ENCODE measurements at regions of chr5 and their contacts with region 1.

Region 1: GRCh38 chr5:69369369-69370121 is at the starts of genes AK6, RAD17 and TAF9:
- DNase-seq: peak; percentile 87 to 99 (median 94)

Region 2: DNA sequence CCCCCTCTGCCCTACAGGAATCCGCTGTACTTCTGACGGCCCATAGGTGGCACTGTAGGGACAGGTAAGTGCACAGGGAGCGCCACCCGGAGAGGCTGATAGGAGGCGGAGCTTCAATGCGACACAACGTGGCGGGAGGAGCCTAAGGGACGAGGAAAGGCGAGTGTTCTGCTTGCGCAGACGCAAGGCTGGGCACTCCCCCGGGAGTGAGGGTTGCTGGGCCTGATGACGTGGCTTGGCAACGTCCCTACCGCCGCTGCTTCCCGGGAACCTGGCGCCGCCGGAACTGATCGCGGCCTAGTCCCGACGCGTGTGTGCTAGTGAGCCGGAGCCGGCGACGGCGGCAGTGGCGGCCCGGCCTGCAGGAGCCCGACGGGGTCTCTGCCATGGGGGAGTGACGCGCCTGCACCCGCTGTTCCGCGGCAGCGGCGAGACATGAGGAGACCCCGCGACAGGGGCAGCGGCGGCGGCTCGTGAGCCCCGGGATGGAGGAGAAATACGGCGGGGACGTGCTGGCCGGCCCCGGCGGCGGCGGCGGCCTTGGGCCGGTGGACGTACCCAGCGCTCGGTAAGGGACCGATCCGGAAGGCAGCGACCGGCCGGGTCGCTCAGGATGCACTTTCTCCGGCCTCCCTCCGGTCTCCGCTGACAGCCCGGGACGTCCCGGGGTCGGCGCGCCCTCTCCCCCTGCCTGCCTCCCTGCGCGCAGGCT is 275.6 kb before region 1 on chr5 and contains the start of gene SLC30A5:
- intact Hi-C with region 1: loop called (anchors 1 kb)
- DNase-seq: peak; percentile 98 to 100 (median 99)

Region 3: DNA sequence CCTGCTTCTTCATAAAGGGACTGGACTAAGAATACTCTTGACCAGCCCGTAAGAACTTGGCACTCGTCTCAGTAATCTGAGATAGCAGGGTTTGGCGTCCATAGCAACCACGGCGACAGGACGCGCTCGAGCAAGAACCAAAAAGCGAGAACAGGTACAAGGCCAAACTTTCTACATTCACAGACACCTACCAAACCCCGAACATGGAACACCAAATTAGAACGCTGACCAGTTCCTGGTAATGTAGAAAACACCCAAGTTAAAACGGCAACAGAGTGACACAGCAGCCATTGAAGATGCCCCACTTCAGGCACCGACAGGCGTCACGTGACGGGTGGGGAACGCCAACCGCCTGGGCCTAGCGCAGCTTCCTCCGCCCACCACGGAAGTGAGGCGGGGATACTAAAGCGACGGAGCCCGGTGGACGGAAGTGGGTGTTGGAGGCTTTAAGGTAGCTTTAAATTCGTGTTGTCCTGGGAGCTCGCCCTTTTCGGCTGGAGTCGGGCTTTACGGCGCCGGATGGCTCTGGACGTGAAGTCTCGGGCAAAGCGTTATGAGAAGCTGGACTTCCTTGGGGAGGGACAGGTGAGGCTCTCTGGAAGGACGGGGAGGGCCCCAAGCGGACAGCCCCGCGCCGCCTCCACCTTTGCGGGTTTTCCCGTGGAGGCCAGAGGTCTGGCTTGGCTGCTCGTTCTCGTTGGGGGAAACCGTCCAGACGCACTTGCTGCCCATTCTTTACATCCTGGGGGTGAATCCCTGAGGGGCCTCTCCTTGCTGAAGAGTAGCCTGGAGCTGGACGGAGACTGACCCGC is 134.9 kb before region 1 on chr5 and contains the start of gene CDK7:
- intact Hi-C with region 1: loop called (anchors 5 kb)
- DNase-seq: peak; percentile 88 to 99 (median 96)

Region 4: GRCh38 chr5:69265931-69266330 is 103.6 kb before region 1 on chr5:
- intact Hi-C with region 1: no loop called
- DNase-seq: no peak

Region 5: DNA sequence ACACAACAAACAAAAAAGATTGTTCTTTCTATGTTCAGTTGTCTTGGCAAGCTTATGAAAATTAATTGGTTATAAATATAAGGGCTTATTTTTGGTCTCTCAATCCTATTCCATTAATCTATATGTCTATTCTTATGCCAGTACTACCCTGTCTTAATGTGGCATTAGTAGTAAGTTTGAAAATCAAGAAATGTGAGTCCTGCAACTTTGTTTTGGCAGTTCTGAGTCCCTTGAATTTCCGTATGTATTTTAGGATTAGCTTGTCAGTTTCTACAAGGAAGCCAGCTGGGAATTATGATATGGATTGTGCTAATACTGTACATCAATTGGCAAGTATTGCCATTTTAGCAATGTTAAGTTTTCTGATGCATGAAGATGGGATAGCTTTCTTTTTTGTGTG is 26.5 kb before region 1 on chr5:
- intact Hi-C with region 1: no loop called
- DNase-seq: no peak